ENCODE measurements at regions of chr2 and their contacts with region 1.

Region 1: GRCh38 chr2:95314964-95315611 is 17.9 kb downstream of the KCNIP3 start:
- DNase-seq: peak; percentile 78
- H3K4me3 Mint-ChIP-seq: no peak overlapping the region
- H3K27ac Mint-ChIP-seq: no peak overlapping the region
- H3K4me1 Mint-ChIP-seq: peaks cover 26% of the 10 kb centered on the region
- H3K27me3 Mint-ChIP-seq: peaks cover 55% of the 10 kb centered on the region
- CTCF ChIP-seq: peak; percentile 72

Region 2: DNA sequence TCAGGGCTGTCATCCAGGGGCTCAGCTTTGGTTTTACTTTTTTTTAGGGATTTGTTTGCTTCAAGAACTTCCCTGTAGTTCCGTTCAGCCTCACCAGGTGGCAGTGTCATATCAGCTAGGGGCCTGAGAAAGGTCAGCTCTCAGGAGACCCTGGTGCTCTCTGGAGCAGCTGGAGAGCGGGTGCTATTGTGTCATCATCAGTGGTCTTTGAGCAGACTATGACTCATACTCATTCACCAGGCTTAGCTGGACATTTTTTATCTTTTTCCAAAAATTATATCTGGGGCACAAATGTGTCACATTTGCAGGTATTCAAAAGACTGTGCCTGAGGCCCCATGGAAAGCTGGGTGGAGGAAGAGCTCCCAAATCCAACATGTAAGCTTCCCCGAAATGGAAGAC is 83.4 kb before region 1 on chr2:
- CTCF ChIA-PET with region 1: interaction called, 20 read pairs
- intact Hi-C with region 1: loop called (anchors 1 kb)
- DNase-seq: peak; percentile 75
- H3K4me3 Mint-ChIP-seq: no peak overlapping the region
- H3K27ac Mint-ChIP-seq: no peak overlapping the region
- H3K4me1 Mint-ChIP-seq: no peaks in the 10 kb centered on the region
- H3K27me3 Mint-ChIP-seq: no peaks in the 10 kb centered on the region
- CTCF ChIP-seq: peak; percentile 88

Region 3: DNA sequence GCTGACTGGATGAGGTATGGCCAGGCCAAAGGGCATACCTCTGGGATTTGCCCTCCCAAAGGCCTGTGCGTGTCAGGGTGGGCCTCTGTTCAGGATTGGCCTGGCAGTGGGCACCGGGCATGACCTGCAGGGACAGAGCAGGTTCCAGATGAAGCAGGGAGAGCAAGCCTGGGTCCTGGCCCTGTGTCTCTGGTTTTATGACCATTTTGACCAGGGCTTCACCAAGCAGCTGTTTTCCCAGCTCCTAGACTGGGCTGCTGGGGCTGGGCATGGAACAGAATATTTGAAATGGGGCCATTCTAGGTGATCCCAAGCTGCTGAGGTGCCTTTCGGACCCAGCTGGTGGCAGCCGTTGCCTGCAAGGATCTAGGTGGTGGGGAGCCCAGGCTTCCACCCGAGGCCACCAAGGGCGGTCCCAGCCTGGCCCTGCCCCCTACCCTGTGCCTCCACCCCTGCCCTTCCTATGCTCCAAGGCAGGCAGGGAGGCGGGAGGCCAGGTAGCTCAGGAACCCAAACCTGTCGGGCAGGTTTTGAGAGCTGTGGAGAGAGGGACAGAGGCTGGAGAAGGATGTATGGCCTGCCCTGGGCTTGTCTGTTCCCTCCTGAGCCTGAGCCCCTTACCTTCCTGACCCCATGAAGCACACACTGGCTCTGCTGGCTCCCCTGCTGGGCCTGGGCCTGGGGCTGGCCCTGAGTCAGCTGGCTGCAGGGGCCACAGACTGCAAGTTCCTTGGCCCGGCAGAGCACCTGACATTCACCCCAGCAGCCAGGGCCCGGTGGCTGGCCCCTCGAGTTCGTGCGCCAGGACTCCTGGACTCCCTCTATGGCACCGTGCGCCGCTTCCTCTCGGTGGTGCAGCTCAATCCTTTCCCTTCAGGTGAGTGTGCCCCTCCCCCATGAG is 40.9 kb before region 1 on chr2 and contains the start of gene PROM2:
- CTCF ChIA-PET with region 1: no interaction called
- intact Hi-C with region 1: loop called (anchors 5 kb)
- DNase-seq: peak; percentile 86
- H3K4me3 Mint-ChIP-seq: peak within 1 kb of the TSS; percentile 77
- H3K27ac Mint-ChIP-seq: peak within 1 kb of the TSS; percentile 85
- H3K4me1 Mint-ChIP-seq: peaks cover 16% of the 10 kb centered on the region
- H3K27me3 Mint-ChIP-seq: no peaks in the 10 kb centered on the region
- CTCF ChIP-seq: no peak
- total RNA-seq, gene PROM2: 24.7 and 29.9 TPM in 2 replicates

Region 4: GRCh38 chr2:95392730-95393455 is 77.8 kb after region 1 on chr2:
- CTCF ChIA-PET with region 1: no interaction called
- intact Hi-C with region 1: no loop called
- DNase-seq: no peak
- H3K4me3 Mint-ChIP-seq: no peak overlapping the region
- H3K27ac Mint-ChIP-seq: no peak overlapping the region
- H3K4me1 Mint-ChIP-seq: no peaks in the 10 kb centered on the region
- H3K27me3 Mint-ChIP-seq: peaks cover 13% of the 10 kb centered on the region
- CTCF ChIP-seq: no peak

Region 5: GRCh38 chr2:96174251-96175144 is 859.4 kb after region 1 on chr2:
- CTCF ChIA-PET with region 1: no interaction called
- intact Hi-C with region 1: no loop called
- DNase-seq: peak; percentile 85
- H3K4me3 Mint-ChIP-seq: no peak overlapping the region
- H3K27ac Mint-ChIP-seq: no peak overlapping the region
- H3K4me1 Mint-ChIP-seq: no peaks in the 10 kb centered on the region
- H3K27me3 Mint-ChIP-seq: peaks cover 14% of the 10 kb centered on the region
- CTCF ChIP-seq: peak; percentile 85